ENCODE measurements at regions of chr12 and their contacts with region 1.

Region 1: DNA sequence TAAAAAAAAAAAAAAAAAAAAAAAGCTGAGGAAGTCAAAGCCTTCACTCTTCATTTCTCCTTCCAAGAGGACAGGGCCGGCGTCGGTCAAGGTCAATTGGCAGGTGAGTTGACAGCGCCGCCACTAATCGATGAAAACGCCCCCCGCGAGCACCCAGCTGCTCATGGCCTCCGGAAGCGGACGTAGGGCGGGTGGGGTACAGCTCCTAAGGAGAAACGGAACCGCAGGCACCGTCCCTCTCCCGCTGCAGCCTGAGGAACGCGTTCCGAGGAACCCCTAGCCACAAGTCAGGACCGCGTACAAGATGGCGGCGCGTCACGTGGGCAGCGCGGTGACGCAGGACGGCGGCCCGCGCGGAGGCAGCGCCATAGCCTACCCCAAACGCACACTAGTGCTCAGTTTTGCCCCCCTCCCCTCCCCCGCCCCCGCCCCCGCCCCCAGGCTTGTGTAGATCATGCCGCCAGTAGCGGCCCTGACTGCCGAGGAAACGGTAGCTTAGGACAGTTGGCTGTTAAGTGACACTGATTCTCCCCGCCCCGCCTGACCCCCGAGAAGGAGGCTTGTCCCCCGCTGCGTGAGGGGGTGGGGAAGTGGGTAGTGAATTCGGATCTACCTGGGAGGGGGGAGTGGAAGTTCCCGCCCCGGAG is at the start of gene ATF1:
- DNase-seq: peak; percentile 79
- H3K4me3 ChIP-seq: peak within 1 kb of the TSS; percentile 90
- H3K27ac ChIP-seq: peak within 1 kb of the TSS; percentile 95
- H3K27me3 ChIP-seq: no peaks in the 10 kb centered on the region
- CTCF ChIP-seq: no peak
- polyA plus RNA-seq, gene ATF1: 60.5 and 63.1 TPM in 2 replicates

Region 2: DNA sequence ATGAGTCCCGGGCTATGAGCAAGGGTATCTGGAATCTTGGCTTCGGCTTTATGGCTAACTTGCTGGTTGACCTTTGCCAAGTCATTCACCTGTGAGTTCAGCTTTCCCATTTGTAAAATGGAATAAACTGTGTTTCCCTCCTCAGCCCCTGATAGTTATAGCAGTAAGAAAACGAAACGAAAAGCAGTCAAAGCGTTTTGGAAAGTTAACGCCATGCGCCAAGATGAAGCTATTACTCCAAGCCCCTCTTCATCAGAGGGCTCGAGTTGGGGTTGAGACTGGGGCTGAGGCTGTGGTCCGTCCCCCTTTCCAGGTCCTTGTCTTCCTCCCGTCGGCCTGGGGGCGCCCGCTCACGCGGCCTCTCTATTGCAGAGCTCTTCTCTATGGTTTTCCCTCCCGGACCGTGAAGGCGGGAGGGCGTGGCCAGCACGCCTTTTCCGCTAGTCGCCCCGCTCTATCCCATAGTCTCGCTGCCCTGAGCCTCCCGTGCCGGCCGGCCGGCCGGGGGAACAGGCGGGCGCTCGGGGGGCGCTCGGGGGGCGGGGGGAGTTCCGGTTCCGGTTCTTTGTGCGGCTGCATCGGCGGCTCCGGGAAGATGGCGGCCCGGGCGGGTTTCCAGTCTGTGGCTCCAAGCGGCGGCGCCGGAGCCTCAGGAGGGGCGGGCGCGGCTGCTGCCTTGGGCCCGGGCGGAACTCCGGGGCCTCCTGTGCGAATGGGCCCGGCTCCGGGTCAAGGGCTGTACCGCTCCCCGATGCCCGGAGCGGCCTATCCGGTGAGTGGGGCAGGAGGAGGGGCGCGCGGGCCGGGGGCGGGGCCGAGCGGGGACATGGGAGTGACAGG is 678.8 kb before region 1 on chr12 and contains the start of gene SMARCD1:
- CTCF ChIA-PET with region 1: no interaction called
- POLR2A ChIA-PET with region 1: no interaction called
- DNase-seq: peak; percentile 81
- H3K4me3 ChIP-seq: peak within 1 kb of the TSS; percentile 82
- H3K27ac ChIP-seq: peak within 1 kb of the TSS; percentile 87
- H3K27me3 ChIP-seq: no peaks in the 10 kb centered on the region
- CTCF ChIP-seq: peak; percentile 53
- polyA plus RNA-seq, gene SMARCD1: 57.2 and 65.1 TPM in 2 replicates

Region 3: DNA sequence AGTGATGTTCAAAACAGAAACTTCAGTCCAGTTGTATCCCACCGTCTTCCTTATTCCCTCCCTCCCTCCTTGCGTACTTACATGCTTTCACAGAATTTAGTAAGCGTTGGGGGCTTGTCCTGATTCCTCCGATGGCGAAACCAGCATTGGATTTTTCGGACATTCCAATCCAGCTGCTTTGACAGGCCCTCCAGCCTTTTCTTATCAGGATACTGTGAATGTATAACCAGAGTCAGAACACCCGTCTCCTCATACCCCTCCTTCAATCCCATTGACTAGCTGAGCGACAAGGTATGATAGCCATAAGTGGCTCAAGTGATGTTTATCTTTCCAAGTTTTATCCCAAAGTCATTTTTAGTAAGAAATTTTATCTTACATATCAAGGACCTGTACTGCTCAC is 620.8 kb before region 1 on chr12:
- CTCF ChIA-PET with region 1: no interaction called
- POLR2A ChIA-PET with region 1: no interaction called
- DNase-seq: no peak
- H3K4me3 ChIP-seq: no peak overlapping the region
- H3K27ac ChIP-seq: no peak overlapping the region
- H3K27me3 ChIP-seq: no peaks in the 10 kb centered on the region
- CTCF ChIP-seq: no peak

Region 4: GRCh38 chr12:50550530-50551223 is 213.1 kb before region 1 on chr12:
- CTCF ChIA-PET with region 1: no interaction called
- POLR2A ChIA-PET with region 1: no interaction called
- DNase-seq: no peak
- H3K4me3 ChIP-seq: no peak overlapping the region
- H3K27ac ChIP-seq: no peak overlapping the region
- H3K27me3 ChIP-seq: no peaks in the 10 kb centered on the region
- CTCF ChIP-seq: no peak

Region 5: GRCh38 chr12:50661300-50662115 is 102.3 kb before region 1 on chr12:
- CTCF ChIA-PET with region 1: no interaction called
- POLR2A ChIA-PET with region 1: no interaction called
- DNase-seq: no peak
- H3K4me3 ChIP-seq: no peak overlapping the region
- H3K27ac ChIP-seq: no peak overlapping the region
- H3K27me3 ChIP-seq: no peaks in the 10 kb centered on the region
- CTCF ChIP-seq: no peak

Region 6: GRCh38 chr12:50775251-50775650 is 11.5 kb after region 1 on chr12:
- CTCF ChIA-PET with region 1: interaction called, 14 read pairs
- POLR2A ChIA-PET with region 1: interaction called, 4 read pairs
- DNase-seq: no peak
- H3K4me3 ChIP-seq: no peak overlapping the region
- H3K27ac ChIP-seq: no peak overlapping the region
- H3K27me3 ChIP-seq: no peaks in the 10 kb centered on the region
- CTCF ChIP-seq: no peak

Region 7: GRCh38 chr12:50786498-50787231 is 22.9 kb after region 1 on chr12:
- CTCF ChIA-PET with region 1: interaction called, 24 read pairs
- POLR2A ChIA-PET with region 1: interaction called, 7 read pairs
- DNase-seq: peak; percentile 93
- H3K4me3 ChIP-seq: no peak overlapping the region
- H3K27ac ChIP-seq: peak overlapping the region; percentile 96
- H3K27me3 ChIP-seq: no peaks in the 10 kb centered on the region
- CTCF ChIP-seq: no peak

Region 8: GRCh38 chr12:50799908-50800307 is 36.1 kb after region 1 on chr12:
- CTCF ChIA-PET with region 1: interaction called, 10 read pairs
- POLR2A ChIA-PET with region 1: no interaction called
- DNase-seq: no peak
- H3K4me3 ChIP-seq: no peak overlapping the region
- H3K27ac ChIP-seq: no peak overlapping the region
- H3K27me3 ChIP-seq: no peaks in the 10 kb centered on the region
- CTCF ChIP-seq: no peak

Region 9: GRCh38 chr12:50825372-50825838 is 61.6 kb after region 1 on chr12:
- CTCF ChIA-PET with region 1: interaction called, 18 read pairs
- POLR2A ChIA-PET with region 1: interaction called, 3 read pairs
- DNase-seq: peak; percentile 50
- H3K4me3 ChIP-seq: no peak overlapping the region
- H3K27ac ChIP-seq: no peak overlapping the region
- H3K27me3 ChIP-seq: no peaks in the 10 kb centered on the region
- CTCF ChIP-seq: peak; percentile 37

Region 10: GRCh38 chr12:50986966-50987737 is 223.4 kb after region 1 on chr12:
- CTCF ChIA-PET with region 1: interaction called, 57 read pairs
- POLR2A ChIA-PET with region 1: no interaction called
- DNase-seq: peak; percentile 32
- H3K4me3 ChIP-seq: no peak overlapping the region
- H3K27ac ChIP-seq: no peak overlapping the region
- H3K27me3 ChIP-seq: no peaks in the 10 kb centered on the region
- CTCF ChIP-seq: peak; percentile 75

Region 11: DNA sequence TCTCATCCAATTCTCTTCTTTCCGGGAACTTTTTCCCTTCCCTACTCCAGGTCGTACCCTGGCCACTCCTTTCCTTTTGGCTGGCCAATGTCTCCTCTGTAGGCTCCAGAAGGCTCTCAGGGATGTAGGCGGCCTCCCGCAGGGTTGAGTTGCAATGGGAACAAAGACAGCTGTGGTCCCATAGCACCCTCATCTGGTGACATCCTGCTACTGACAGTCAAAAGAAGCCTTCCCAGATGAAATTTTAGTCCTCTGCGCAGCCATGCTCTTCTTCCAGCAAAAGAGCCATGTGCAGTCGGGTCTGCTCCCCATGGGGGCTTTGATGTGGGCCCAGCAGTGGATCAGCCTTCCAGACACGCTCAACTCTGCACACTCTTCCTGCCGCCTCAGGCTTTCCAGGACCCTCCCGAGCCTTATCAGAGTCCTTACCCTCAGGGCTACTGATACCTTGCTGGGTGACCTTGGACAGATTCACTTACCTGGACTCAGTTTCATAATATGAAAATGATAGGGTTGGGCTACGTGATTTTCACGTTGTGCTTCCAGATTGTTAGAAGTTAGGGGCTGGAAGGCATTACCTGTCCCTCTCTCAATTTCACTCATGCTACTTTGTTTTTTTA is 588.3 kb after region 1 on chr12:
- CTCF ChIA-PET with region 1: interaction called, 16 read pairs
- POLR2A ChIA-PET with region 1: no interaction called
- DNase-seq: peak; percentile 30
- H3K4me3 ChIP-seq: no peak overlapping the region
- H3K27ac ChIP-seq: no peak overlapping the region
- H3K27me3 ChIP-seq: no peaks in the 10 kb centered on the region
- CTCF ChIP-seq: peak; percentile 76